ENCODE measurements at regions of chr12 and their contacts with region 1.

Region 1: GRCh38 chr12:94762259-94762942 is 112.0 kb upstream of the TMCC3 start:
- DNase-seq: no peak
- ATAC-seq: peak; percentile 23
- H3K4me3 ChIP-seq: peak overlapping the region in 1 of 5 experiments; percentile 13
- H3K4me3 Mint-ChIP-seq: peak overlapping the region; percentile 51
- H3K27ac ChIP-seq: no peak overlapping the region
- H3K27ac Mint-ChIP-seq: no peak overlapping the region
- H3K4me1 ChIP-seq: peaks cover 34 to 39% of the 10 kb centered on the region in 2 donors
- H3K4me1 Mint-ChIP-seq: peaks cover 43% of the 10 kb centered on the region
- H3K27me3 ChIP-seq: no peaks in the 10 kb centered on the region
- H3K27me3 Mint-ChIP-seq: no peaks in the 10 kb centered on the region
- CTCF ChIP-seq: no peak

Region 2: DNA sequence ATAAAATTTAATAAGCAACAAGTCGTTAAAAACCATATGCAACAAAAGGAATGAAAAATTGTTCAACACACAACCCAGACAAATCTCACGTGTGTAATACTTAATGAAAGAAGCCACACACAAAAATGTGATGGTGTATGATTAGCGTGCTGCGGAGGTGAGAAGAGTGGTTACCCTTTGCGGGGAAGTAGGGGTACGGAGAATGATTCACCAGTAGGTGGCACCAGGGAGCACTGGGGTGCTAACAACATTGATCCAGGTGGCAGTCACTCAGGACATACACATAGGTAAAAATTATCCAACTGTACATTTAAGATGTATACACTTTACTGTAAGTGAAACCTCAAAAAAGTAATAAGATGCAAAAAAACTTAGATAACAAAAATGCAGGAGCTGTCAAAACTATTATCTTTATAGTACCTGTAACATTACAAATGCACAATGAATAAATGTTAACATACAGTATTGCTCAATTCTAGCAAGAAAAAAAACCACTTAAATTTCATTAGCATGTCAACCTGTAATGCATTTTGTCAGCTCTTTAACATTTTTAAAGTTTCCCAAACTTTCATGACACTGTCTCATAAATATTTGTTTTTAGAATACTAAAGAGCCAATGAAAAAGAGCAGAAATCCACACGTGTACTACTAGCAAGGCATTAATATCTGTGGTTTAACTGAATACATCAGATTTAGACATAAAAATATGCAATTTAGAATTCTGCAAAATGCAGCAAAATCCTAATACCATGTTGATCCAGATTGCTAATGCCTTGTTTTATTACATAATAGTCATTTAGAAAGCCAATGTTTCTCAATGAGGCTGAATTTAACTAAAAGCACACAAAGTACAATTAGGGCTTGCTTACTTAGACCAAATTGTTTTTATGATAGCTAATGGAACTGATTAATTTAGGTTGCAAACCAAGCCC is 158.7 kb before region 1 on chr12:
- CTCF ChIA-PET with region 1: interaction called, 4 read pairs
- POLR2A ChIA-PET with region 1: no interaction called
- intact Hi-C with region 1: loop called (anchors 1 kb)
- DNase-seq: peak; percentile 68
- ATAC-seq: peak; percentile 70
- H3K4me3 ChIP-seq: no peak overlapping the region
- H3K4me3 Mint-ChIP-seq: no peak overlapping the region
- H3K27ac ChIP-seq: no peak overlapping the region
- H3K27ac Mint-ChIP-seq: no peak overlapping the region
- H3K4me1 ChIP-seq: no peaks in the 10 kb centered on the region
- H3K4me1 Mint-ChIP-seq: no peaks in the 10 kb centered on the region
- H3K27me3 ChIP-seq: no peaks in the 10 kb centered on the region
- H3K27me3 Mint-ChIP-seq: no peaks in the 10 kb centered on the region
- CTCF ChIP-seq: peak; percentile 77

Region 3: GRCh38 chr12:94710933-94711332 is 51.5 kb before region 1 on chr12:
- CTCF ChIA-PET with region 1: interaction called, 10 read pairs
- POLR2A ChIA-PET with region 1: no interaction called
- intact Hi-C with region 1: loop called (anchors 5 kb)
- DNase-seq: peak; percentile 57
- ATAC-seq: peak; percentile 71
- H3K4me3 ChIP-seq: no peak overlapping the region
- H3K4me3 Mint-ChIP-seq: no peak overlapping the region
- H3K27ac ChIP-seq: no peak overlapping the region
- H3K27ac Mint-ChIP-seq: no peak overlapping the region
- H3K4me1 ChIP-seq: peaks cover 8 to 9% of the 10 kb centered on the region in 2 donors
- H3K4me1 Mint-ChIP-seq: peaks cover 21% of the 10 kb centered on the region
- H3K27me3 ChIP-seq: no peaks in the 10 kb centered on the region
- H3K27me3 Mint-ChIP-seq: no peaks in the 10 kb centered on the region
- CTCF ChIP-seq: peak; percentile 57

Region 4: GRCh38 chr12:94795520-94795919 is 33.1 kb after region 1 on chr12:
- CTCF ChIA-PET with region 1: no interaction called
- POLR2A ChIA-PET with region 1: no interaction called
- intact Hi-C with region 1: no loop called
- DNase-seq: no peak
- ATAC-seq: no peak
- H3K4me3 ChIP-seq: no peak overlapping the region
- H3K4me3 Mint-ChIP-seq: no peak overlapping the region
- H3K27ac ChIP-seq: no peak overlapping the region
- H3K27ac Mint-ChIP-seq: no peak overlapping the region
- H3K4me1 ChIP-seq: peaks cover 5 to 14% of the 10 kb centered on the region in 2 donors
- H3K4me1 Mint-ChIP-seq: peaks cover 48% of the 10 kb centered on the region
- H3K27me3 ChIP-seq: no peaks in the 10 kb centered on the region
- H3K27me3 Mint-ChIP-seq: no peaks in the 10 kb centered on the region
- CTCF ChIP-seq: no peak

Region 5: DNA sequence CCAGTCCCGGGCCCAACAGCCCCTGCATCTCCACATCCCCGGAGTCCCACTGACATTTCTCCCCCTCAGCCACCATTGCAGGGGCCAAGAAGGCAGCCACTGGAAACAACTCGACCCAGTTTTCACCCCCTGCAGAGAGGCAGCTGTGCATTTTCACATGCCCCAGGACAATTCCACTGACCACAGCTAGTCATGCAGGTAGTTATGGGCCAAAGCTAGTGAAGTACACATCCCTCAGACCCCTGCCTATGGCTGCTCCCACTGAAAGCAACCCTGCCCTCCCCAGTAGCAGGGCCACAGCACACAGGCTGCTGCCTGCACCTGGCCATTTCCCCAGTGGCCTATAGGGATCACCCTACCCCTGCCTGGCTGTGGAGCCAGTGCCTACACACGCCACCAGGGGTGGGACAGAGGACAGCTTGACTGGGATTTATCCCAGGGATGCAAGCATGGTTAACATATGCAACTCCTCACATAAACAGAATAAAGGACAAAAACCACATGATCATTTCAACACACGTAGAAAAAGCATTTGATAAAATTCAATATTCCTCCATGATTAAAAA is 87.1 kb after region 1 on chr12:
- CTCF ChIA-PET with region 1: no interaction called
- POLR2A ChIA-PET with region 1: no interaction called
- intact Hi-C with region 1: no loop called
- DNase-seq: no peak
- ATAC-seq: no peak
- H3K4me3 ChIP-seq: no peak overlapping the region
- H3K4me3 Mint-ChIP-seq: no peak overlapping the region
- H3K27ac ChIP-seq: no peak overlapping the region
- H3K27ac Mint-ChIP-seq: no peak overlapping the region
- H3K4me1 ChIP-seq: peaks cover 12 to 19% of the 10 kb centered on the region in 2 donors
- H3K4me1 Mint-ChIP-seq: peaks cover 20% of the 10 kb centered on the region
- H3K27me3 ChIP-seq: no peaks in the 10 kb centered on the region
- H3K27me3 Mint-ChIP-seq: peaks cover 13% of the 10 kb centered on the region
- CTCF ChIP-seq: no peak

Region 6: DNA sequence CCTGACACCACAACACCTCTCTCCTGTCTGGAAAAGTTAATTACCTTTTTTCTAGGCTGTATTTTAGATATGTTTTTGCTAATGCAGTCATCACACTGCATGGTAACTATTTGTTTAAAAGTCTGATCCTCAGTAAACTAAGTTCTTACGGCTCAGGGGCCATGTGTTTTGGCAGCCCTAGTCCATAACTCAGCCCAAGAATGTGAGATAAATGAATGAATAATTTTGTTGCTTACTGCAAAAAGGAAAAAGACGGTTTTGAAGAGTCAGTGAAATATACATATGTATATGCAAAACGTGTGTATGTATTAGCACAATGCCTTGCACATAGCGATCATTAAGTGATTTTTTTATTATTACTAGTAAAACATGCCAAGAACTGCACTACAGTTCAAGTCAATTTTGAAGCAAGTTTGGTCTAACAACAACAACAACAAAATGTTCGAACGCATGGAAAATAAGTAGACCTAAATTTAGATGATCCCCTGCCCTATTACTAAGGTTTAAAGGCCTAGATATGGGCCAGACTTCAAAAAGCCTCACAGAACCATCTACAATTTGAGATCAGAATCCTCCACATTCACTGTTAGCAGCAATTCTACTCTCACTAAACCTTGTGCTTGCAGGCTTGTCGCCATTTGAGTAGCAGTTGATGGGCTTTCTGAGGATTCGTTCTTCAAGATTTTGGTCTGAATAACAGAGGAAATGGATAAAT is 101.1 kb after region 1 on chr12:
- CTCF ChIA-PET with region 1: no interaction called
- POLR2A ChIA-PET with region 1: no interaction called
- intact Hi-C with region 1: no loop called
- DNase-seq: no peak
- ATAC-seq: no peak
- H3K4me3 ChIP-seq: no peak overlapping the region
- H3K4me3 Mint-ChIP-seq: no peak overlapping the region
- H3K27ac ChIP-seq: no peak overlapping the region
- H3K27ac Mint-ChIP-seq: no peak overlapping the region
- H3K4me1 ChIP-seq: no peaks in the 10 kb centered on the region
- H3K4me1 Mint-ChIP-seq: no peaks in the 10 kb centered on the region
- H3K27me3 ChIP-seq: no peaks in the 10 kb centered on the region
- H3K27me3 Mint-ChIP-seq: no peaks in the 10 kb centered on the region
- CTCF ChIP-seq: no peak

Measured in B cell (primary cell).